Activated naive CD4-positive, alpha-beta T cell treated with anti-CD3 and anti-CD28 coated beads for 36 hours (primary cell): ENCODE measurements at regions of chr17 and their contacts with region 1.

Region 1: GRCh38 chr17:31013844-31014243 is 43.0 kb downstream of the RNF135 start:
- DNase-seq: no peak
- H3K4me3 Mint-ChIP-seq: no peak overlapping the region
- H3K27ac Mint-ChIP-seq: no peak overlapping the region
- H3K4me1 Mint-ChIP-seq: peaks cover 9% of the 10 kb centered on the region
- H3K27me3 Mint-ChIP-seq: peaks cover 2% of the 10 kb centered on the region

Region 2: DNA sequence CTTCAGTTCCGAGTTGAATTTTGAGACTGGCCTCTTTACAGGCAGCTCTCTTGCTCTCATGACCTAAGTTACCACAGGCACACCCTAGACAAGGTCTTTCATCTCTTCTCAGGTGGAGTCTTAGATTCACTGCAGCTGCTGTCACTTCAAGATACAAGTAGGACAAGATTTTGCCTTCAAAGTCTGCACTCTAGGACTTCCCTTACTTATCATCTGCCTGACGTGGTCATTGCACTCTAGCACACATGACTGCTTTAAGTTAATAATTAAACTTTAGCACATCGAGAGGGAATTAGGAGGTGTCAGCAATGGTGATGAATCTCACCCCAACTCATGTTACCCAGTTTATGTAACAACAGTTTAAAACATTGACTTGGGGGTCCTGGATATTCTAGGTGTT is 17.4 kb before region 1 on chr17:
- CTCF ChIA-PET with region 1: no interaction called
- intact Hi-C with region 1: no loop called
- DNase-seq: no peak
- H3K4me3 Mint-ChIP-seq: no peak overlapping the region
- H3K27ac Mint-ChIP-seq: no peak overlapping the region
- H3K4me1 Mint-ChIP-seq: no peaks in the 10 kb centered on the region
- H3K27me3 Mint-ChIP-seq: no peaks in the 10 kb centered on the region

Region 3: DNA sequence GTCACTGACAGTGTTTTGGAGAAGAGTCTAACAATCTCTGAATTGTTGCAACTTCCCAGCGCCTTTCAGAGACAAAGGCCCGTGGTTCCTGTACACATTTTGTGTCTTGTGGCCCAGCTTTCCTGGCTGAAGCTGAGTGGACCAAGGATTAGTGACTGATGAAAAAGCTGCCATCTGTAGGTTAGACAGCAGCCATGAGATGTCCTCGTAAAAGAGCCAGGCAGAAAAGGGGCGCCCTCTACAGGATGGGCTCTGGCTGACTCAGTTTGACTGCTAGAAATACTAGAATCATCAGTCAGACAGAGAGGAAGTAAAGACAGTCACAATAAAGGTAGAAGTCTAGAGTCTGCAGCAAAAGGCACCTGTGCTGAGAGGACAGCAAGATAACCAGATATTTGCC is 54.4 kb after region 1 on chr17:
- CTCF ChIA-PET with region 1: no interaction called
- intact Hi-C with region 1: loop called (anchors 5 kb)
- DNase-seq: peak; percentile 83
- H3K4me3 Mint-ChIP-seq: no peak overlapping the region
- H3K27ac Mint-ChIP-seq: no peak overlapping the region
- H3K4me1 Mint-ChIP-seq: peaks cover 2% of the 10 kb centered on the region
- H3K27me3 Mint-ChIP-seq: no peaks in the 10 kb centered on the region

Region 4: DNA sequence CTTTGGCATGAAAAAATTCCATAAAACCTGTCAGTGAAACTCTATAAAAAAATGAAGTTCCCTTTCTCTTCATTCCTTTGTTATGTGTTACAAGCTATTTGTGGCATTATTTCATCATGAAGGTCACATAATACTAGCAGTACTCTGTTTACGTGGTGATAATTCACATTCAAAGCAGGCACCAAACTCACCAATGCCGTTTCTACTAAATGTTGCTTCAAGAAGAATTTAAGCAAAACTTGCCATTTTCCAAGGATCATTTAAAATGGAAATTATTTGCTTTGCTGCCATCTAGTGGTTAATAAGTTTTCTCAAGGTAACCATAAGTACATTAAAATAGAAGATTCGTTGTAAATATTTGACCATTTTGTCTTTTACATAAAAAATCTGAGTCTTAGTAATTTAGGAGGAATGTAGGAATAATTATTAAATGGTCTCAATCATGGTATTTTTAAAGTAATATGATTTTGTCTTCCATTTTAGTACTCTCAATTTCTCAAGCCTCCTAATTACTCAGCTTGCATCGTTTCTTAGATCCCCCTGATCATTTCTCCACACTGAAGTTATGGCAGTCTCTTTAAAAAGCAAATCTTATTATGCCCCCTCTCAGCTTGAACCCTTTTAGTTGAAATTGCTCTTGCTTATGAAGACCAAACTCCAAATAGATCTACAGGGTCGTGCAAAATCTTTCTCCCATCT is 202.4 kb after region 1 on chr17:
- CTCF ChIA-PET with region 1: interaction called, 8 read pairs
- intact Hi-C with region 1: loop called (anchors 2 kb)
- DNase-seq: no peak
- H3K4me3 Mint-ChIP-seq: no peak overlapping the region
- H3K27ac Mint-ChIP-seq: no peak overlapping the region
- H3K4me1 Mint-ChIP-seq: no peaks in the 10 kb centered on the region
- H3K27me3 Mint-ChIP-seq: no peaks in the 10 kb centered on the region

Region 5: DNA sequence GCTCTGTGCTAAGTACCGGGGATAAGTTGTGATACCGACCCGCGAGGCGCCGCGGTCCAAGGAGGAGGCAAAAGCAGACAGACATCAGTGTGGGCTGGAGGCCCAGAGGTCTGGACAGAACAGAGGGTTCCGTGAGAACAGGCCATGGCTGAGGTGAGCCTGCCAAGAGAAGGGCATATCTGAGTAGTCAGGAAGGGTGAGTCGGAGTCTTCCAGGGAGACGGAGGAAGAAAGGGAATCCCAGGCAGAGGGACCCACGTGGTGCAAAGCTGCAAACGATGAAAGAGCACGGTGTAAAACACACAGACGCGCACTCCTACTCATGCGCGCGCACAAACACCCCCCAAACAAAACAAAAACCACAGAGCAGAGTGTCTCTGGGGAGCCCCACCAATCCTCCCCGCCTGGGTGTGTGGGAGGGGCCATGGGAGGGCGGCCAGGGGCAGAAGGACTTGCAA is 1269.9 kb after region 1 on chr17:
- CTCF ChIA-PET with region 1: no interaction called
- intact Hi-C with region 1: no loop called
- DNase-seq: no peak
- H3K4me3 Mint-ChIP-seq: no peak overlapping the region
- H3K27ac Mint-ChIP-seq: no peak overlapping the region
- H3K4me1 Mint-ChIP-seq: no peaks in the 10 kb centered on the region
- H3K27me3 Mint-ChIP-seq: peaks cover 5% of the 10 kb centered on the region